HepG2 (cell line): ENCODE measurements at regions of chr2 and their contacts with region 1.

Region 1: GRCh38 chr2:42494355-42495233 is 812 bp upstream of the KCNG3 start:
- DNase-seq: peak; percentile 87
- ATAC-seq: peak; percentile 67
- H3K4me3 ChIP-seq: peak overlapping the region; percentile 75 to 88 (median 86)
- H3K27ac ChIP-seq: peak overlapping the region; percentile 77
- H3K4me1 ChIP-seq: peaks cover 75% of the 10 kb centered on the region
- H3K27me3 ChIP-seq: no peaks in the 10 kb centered on the region
- CTCF ChIP-seq: peak; percentile 92
- EP300 ChIP-seq: peak in 1 of 2 experiments; percentile 31; a peak in 1 of 4 replicates
- POLR2A ChIP-seq: no peak
- RAD21 ChIP-seq: peak; percentile 90

Region 2: GRCh38 chr2:42267530-42267929 is 227.1 kb before region 1 on chr2:
- CTCF ChIA-PET with region 1: no interaction called
- POLR2A ChIA-PET with region 1: no interaction called
- in situ Hi-C with region 1: no loop called
- intact Hi-C with region 1: no loop called
- DNase-seq: no peak
- ATAC-seq: peak; percentile 18
- H3K4me3 ChIP-seq: no peak overlapping the region
- H3K27ac ChIP-seq: peak overlapping the region; percentile 6
- H3K4me1 ChIP-seq: no peaks in the 10 kb centered on the region
- H3K27me3 ChIP-seq: no peaks in the 10 kb centered on the region
- CTCF ChIP-seq: no peak
- EP300 ChIP-seq: no peak
- POLR2A ChIP-seq: no peak
- RAD21 ChIP-seq: no peak

Region 3: GRCh38 chr2:42360890-42361727 is 133.5 kb before region 1 on chr2 and contains the start of gene COX7A2L:
- CTCF ChIA-PET with region 1: no interaction called
- POLR2A ChIA-PET with region 1: no interaction called
- in situ Hi-C with region 1: no loop called
- intact Hi-C with region 1: loop called (anchors 5 kb)
- DNase-seq: peak; percentile 96
- ATAC-seq: peak; percentile 92
- H3K4me3 ChIP-seq: peak within 1 kb of the TSS; percentile 84 to 98 (median 94)
- H3K27ac ChIP-seq: peak within 1 kb of the TSS; percentile 96
- H3K4me1 ChIP-seq: peaks cover 43% of the 10 kb centered on the region
- H3K27me3 ChIP-seq: no peaks in the 10 kb centered on the region; a peak in 1 of 5 replicates
- CTCF ChIP-seq: peak; percentile 82
- EP300 ChIP-seq: no peak
- POLR2A ChIP-seq: peak; percentile 87 to 94
- RAD21 ChIP-seq: peak; percentile 33
- total RNA-seq, gene COX7A2L: 201 and 272 TPM in 2 replicates

Region 4: DNA sequence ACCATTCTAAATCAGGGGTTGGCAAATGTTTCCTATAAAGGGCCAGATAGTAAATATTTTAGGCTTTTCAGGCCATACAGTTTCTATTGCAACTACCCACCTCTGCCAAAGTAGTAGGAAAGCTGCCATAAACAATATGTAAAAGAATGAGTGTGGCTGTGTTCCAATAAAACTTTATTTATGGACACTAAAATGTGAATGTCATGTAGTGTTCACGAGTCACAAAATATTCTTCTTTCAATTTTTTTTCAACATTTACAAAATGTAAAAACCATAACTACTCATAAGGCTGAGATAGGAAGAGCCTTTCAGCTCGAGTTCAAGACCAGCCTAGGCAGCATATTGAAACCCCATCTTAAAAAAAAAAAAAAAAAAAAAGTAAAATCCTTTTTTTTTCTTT is 14.2 kb before region 1 on chr2:
- CTCF ChIA-PET with region 1: no interaction called
- POLR2A ChIA-PET with region 1: no interaction called
- in situ Hi-C with region 1: no loop called
- intact Hi-C with region 1: no loop called
- DNase-seq: no peak
- ATAC-seq: no peak
- H3K4me3 ChIP-seq: no peak overlapping the region
- H3K27ac ChIP-seq: no peak overlapping the region
- H3K4me1 ChIP-seq: peaks cover 12% of the 10 kb centered on the region
- H3K27me3 ChIP-seq: no peaks in the 10 kb centered on the region
- CTCF ChIP-seq: no peak
- EP300 ChIP-seq: no peak
- POLR2A ChIP-seq: no peak
- RAD21 ChIP-seq: no peak

Region 5: DNA sequence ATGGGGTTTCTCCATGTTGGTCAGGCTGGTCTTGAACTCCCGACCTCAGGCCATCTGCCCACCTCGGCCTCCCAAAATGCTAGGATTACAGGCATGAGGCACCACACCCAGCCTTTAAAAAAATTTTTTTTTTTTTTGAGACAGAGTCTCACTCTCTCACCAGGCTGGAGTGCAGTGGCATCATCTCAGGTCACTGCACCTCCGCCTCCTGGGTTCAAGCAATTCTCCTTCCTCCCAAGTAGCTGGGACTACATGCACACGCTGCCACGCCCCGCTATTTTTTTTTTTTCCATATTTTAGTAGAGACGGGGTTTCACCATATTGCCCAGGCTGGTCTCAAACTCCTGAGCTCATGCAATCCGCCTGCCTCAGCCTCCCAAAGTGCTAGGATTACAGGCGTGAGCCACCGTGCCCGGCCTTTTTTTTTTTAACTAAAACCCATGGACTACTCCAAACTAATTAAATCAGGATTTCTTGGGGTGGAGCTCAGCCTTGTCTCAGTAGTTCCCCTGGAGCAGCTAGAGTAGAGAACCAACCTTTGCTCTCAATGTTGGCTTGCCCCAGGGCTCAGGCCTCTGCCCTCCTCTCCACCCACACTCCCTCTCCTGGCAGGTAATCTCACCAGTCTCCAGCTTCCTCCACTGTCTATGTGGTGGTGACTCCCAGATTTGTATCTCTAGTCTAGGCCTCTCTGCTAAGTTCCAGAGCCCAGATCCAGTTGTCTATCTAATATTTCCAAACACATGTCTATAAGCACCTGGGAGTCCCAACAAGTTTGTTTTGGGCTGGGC is 64.0 kb after region 1 on chr2:
- CTCF ChIA-PET with region 1: interaction called, 3 read pairs
- POLR2A ChIA-PET with region 1: no interaction called
- in situ Hi-C with region 1: no loop called
- intact Hi-C with region 1: loop called (anchors 1 kb)
- DNase-seq: peak; percentile 54
- ATAC-seq: peak; percentile 95
- H3K4me3 ChIP-seq: no peak overlapping the region
- H3K27ac ChIP-seq: peak overlapping the region; percentile 1
- H3K4me1 ChIP-seq: peaks cover 34% of the 10 kb centered on the region
- H3K27me3 ChIP-seq: no peaks in the 10 kb centered on the region
- CTCF ChIP-seq: peak; percentile 71
- EP300 ChIP-seq: no peak
- POLR2A ChIP-seq: no peak
- RAD21 ChIP-seq: peak; percentile 45; the same call in 1 of the 2 replicates

Region 6: DNA sequence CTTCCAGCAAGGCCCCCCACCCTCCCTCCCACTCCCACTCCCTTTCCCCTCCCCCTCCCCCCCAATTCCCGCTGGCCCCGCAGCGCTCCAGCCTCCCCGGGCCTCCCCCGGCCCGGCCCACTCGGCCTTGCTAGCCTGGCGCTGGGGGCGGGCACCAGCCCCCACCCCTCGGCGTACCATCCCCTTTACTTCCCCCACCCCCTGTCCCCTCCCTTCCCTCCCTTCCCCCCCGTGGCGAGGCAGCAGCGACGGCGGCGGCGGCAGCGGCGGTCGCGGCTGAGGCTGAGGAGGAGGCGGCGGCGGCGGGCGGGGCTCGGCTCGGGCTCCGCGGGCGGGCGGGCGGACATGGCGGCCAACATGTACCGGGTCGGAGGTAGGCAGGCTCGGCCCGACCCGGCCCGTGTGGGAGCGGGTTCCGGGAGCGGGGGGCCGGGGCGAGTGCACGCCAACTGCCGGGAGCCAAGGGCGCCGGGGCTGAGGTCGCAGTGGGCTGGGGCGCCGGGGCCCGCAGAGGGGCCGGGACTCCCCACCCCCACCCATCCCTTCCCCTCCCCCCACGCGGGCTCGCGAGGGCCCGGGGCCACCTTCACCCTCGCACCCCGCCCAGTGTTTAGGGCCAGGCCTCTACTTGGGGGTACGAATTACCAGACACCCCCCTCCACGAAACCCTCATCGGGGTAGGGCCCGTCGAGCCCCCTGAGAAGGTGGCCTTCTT is 74.0 kb after region 1 on chr2 and contains the start of gene MTA3:
- CTCF ChIA-PET with region 1: no interaction called
- POLR2A ChIA-PET with region 1: interaction called, 3 read pairs
- in situ Hi-C with region 1: no loop called
- intact Hi-C with region 1: loop called (anchors 2 kb)
- DNase-seq: peak; percentile 27
- ATAC-seq: peak; percentile 74
- H3K4me3 ChIP-seq: peak within 1 kb of the TSS; percentile 74 to 95 (median 75)
- H3K27ac ChIP-seq: peak within 1 kb of the TSS; percentile 79
- H3K4me1 ChIP-seq: peaks cover 53% of the 10 kb centered on the region
- H3K27me3 ChIP-seq: no peaks in the 10 kb centered on the region; a peak in 1 of 5 replicates
- CTCF ChIP-seq: no peak
- EP300 ChIP-seq: no peak
- POLR2A ChIP-seq: no peak
- RAD21 ChIP-seq: no peak; the same call in 1 of the 2 replicates
- total RNA-seq, gene MTA3: 48.8 and 57.6 TPM in 2 replicates

Region 7: GRCh38 chr2:42602218-42602876 is 107.8 kb after region 1 on chr2:
- CTCF ChIA-PET with region 1: no interaction called
- POLR2A ChIA-PET with region 1: no interaction called
- in situ Hi-C with region 1: no loop called
- intact Hi-C with region 1: loop called (anchors 10 kb)
- DNase-seq: peak; percentile 73
- ATAC-seq: peak; percentile 49
- H3K4me3 ChIP-seq: no peak overlapping the region
- H3K27ac ChIP-seq: peak overlapping the region; percentile 32
- H3K4me1 ChIP-seq: peaks cover 57% of the 10 kb centered on the region
- H3K27me3 ChIP-seq: no peaks in the 10 kb centered on the region
- CTCF ChIP-seq: no peak
- EP300 ChIP-seq: no peak
- POLR2A ChIP-seq: no peak
- RAD21 ChIP-seq: no peak